Mammary epithelial cell (primary cell): ENCODE measurements at regions of chr2 and their contacts with region 1.

Region 1: DNA sequence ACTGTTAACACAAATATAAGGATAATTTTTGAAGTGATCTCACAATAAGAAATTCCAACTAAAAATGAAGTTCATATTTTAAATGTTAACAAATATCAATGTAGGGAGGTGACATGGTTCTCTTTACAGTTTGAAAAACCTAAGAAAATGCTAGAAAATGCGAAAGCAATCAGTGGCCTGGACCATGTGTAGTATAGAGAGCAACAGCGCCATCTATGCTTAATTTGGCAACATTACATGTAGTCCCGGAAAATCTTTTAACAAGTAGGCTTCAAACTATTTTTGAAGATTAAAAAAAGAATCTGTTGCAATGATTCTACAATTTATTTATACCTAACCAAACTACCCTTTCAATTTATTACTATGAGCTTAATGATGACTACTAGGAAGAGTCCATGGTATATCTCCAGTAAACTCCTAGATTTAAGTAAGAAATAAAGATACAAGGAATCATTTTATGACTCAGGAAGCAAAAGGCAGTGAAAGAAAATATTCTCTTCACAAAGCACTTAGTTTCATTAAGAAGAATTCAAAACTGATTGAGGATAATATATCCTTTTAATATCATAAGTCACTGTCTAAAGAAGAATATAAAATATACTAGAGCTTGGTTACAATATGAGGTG is 33.3 kb downstream of the NDUFA10 start:
- DNase-seq: peak; percentile 14
- H3K4me3 ChIP-seq: no peak overlapping the region
- H3K27ac ChIP-seq: no peak overlapping the region
- H3K4me1 ChIP-seq: no peaks in the 10 kb centered on the region
- H3K27me3 ChIP-seq: no peaks in the 10 kb centered on the region
- CTCF ChIP-seq: peak; percentile 72 to 74

Region 2: DNA sequence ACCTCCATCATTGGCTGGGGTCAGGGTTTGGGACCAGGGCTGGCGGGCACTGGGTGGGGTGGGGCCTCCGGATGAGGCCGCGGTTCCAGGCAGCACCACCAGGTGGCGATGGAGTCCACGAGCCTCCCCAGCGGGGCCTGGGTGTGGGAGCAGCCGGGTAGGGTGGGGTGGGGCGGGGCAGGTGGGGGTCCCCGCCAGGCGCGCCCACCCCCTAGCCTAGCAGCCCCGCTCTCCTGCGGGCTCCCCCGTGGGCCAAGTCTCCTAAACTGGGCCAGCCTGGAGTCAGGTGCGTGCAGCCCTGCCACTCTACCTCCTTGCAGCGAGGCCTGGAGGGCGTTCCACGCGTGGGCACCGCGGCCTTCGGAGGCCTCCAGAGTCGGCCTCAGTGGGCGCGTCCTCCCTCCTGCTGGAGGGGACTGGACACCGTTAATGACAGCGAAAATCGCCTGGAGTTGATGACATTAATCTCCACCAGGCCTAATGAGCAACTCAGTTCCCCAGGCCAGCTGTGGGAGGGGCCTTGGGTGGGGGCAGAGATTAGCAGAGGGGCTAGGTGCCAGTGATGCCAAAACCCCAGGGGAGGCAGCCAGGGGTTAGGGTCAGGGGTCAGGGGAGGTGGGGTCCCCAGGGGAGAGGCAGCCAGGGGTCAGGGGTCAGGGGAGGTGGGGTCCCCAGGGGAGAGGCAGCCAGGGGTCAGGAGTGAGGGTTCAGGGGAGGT is 956.3 kb before region 1 on chr2:
- CTCF ChIA-PET with region 1: no interaction called
- dilution Hi-C with region 1: no loop called
- in situ Hi-C with region 1: loop called in 1 of 2 experiments (anchors 25 kb)
- intact Hi-C with region 1: loop called (anchors 1 kb)
- DNase-seq: no peak
- H3K4me3 ChIP-seq: no peak overlapping the region
- H3K27ac ChIP-seq: no peak overlapping the region
- H3K4me1 ChIP-seq: no peaks in the 10 kb centered on the region
- H3K27me3 ChIP-seq: peaks cover 9% of the 10 kb centered on the region
- CTCF ChIP-seq: peak; percentile 37 to 89

Region 3: GRCh38 chr2:239275044-239275685 is 716.6 kb before region 1 on chr2:
- CTCF ChIA-PET with region 1: no interaction called
- dilution Hi-C with region 1: no loop called
- in situ Hi-C with region 1: no loop called
- intact Hi-C with region 1: loop called (anchors 2 kb)
- DNase-seq: peak; percentile 94
- H3K4me3 ChIP-seq: peak overlapping the region in 2 of 3 experiments; percentile 8 to 29
- H3K27ac ChIP-seq: peak overlapping the region; percentile 32
- H3K4me1 ChIP-seq: peaks cover 26% of the 10 kb centered on the region
- H3K27me3 ChIP-seq: no peaks in the 10 kb centered on the region
- CTCF ChIP-seq: no peak

Region 4: GRCh38 chr2:239824046-239824694 is 167.6 kb before region 1 on chr2:
- CTCF ChIA-PET with region 1: no interaction called
- dilution Hi-C with region 1: no loop called
- in situ Hi-C with region 1: no loop called
- intact Hi-C with region 1: loop called (anchors 5 kb)
- DNase-seq: peak; percentile 66
- H3K4me3 ChIP-seq: no peak overlapping the region
- H3K27ac ChIP-seq: no peak overlapping the region
- H3K4me1 ChIP-seq: no peaks in the 10 kb centered on the region
- H3K27me3 ChIP-seq: no peaks in the 10 kb centered on the region
- CTCF ChIP-seq: peak in 1 of 2 donors; percentile 23

Region 5: DNA sequence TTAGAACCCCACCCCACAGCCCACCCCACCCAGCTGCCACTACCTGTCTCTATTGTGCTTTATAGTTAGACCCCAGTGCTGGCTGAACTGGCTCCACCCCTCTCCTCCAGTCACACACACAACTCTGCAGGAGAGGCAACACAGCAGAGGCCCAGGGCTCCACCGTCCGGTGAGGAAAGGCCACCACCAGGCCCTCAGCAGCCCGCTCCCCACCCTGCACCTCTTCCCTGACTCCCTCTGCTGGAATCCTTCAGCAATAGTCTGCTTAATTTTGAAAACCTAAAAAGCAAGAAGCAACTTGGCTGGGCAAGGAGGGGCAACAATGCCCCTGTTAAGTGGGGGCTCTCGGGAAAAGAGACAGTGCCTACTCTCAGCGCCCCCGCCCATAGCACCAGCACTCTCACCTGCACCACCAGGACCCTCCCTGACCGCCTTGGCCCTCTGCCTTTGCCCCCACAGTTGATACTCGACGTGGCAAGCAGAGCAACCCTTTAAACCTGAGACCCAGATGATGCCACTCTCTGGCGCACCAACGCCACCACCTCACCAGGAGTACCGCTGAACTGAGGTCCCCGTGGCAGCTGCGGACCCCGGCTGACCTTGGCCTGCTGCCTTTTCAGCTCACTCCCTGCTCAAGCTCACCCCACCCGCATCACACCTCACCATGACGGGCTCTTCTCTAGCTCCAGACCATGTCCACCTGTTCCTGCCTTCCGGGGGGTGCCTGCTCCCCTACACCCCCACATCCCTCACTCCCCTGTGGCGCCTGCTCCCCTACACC is 12.4 kb before region 1 on chr2:
- CTCF ChIA-PET with region 1: no interaction called
- dilution Hi-C with region 1: no loop called
- in situ Hi-C with region 1: no loop called
- intact Hi-C with region 1: no loop called
- DNase-seq: no peak
- H3K4me3 ChIP-seq: no peak overlapping the region
- H3K27ac ChIP-seq: no peak overlapping the region
- H3K4me1 ChIP-seq: no peaks in the 10 kb centered on the region
- H3K27me3 ChIP-seq: no peaks in the 10 kb centered on the region
- CTCF ChIP-seq: no peak

Region 6: DNA sequence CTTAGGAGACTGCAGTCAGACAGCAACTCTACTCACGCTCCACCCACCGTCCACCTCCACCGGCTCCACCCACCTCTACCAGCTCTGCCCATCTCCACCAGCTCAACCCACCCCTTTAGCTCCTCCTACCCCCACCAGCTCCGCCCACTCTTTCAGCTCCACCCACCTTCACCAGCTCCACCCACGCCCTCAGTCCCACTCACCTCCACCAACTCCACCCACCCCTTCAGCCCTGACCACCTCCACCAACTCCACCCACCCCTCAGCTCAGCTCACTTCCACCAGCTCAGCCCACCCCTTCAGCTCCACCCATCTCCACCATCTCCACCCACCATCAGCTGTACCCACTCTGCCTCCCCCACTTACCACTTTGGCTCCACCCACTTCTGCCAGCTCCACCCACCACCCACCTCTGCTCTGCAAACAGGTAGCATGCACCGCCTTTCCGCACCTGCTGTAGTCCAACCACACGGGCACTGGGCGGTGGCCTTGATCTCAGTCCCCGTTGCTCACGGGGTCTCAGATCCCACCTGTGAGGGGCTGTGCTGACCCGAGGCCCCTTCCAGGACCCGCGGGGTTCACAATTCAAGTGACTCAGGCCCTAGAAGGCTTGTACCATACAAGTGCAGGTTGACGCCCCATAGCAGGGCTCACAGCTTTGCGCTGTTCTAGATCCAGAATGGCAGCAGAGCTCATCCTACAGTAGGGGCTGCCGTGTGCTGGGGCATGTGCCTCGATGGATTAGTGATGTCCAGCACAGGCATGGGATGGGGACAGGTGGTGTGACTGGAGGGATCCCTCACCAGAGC is 225.8 kb after region 1 on chr2:
- CTCF ChIA-PET with region 1: no interaction called
- dilution Hi-C with region 1: no loop called
- in situ Hi-C with region 1: no loop called
- intact Hi-C with region 1: no loop called
- DNase-seq: no peak
- H3K4me3 ChIP-seq: no peak overlapping the region
- H3K27ac ChIP-seq: no peak overlapping the region
- H3K4me1 ChIP-seq: no peaks in the 10 kb centered on the region
- H3K27me3 ChIP-seq: peaks cover 3% of the 10 kb centered on the region
- CTCF ChIP-seq: no peak